Heart right ventricle (tissue), 16 donors: ENCODE measurements at regions of chr1 and their contacts with region 1.

Region 1: DNA sequence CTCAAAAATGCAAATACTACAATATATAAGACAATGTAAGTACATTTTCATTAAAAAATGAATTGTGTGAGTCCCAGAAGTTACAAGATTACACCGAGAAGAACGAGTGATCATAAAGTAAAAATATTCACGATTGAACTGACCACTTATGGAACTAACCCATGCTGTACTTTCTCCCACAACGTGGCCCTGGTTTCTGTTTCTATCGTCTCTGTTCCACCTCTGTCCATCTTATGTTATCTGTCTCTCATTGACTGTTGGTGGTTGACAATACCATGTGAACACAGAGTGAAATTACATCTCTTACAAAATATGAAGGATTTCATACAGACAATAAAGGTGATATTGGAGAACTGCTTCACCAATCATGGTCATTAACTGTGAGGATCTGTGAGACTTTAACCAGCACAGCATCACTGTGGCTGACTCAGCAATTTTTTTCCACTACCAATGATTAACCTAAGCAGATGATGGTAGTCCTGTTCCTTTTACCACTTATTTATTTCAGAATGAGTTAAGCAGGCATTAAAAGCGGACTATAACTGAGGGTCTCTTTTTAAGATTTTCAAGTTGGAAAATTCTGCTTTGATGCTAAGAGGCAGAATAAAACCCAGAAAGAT is 165.1 kb downstream of the TGFB2 start:
- DNase-seq: no peak
- ATAC-seq: no peak
- H3K4me3 ChIP-seq: no peak overlapping the region
- H3K27ac ChIP-seq: no peak overlapping the region
- H3K4me1 ChIP-seq: no peaks in the 10 kb centered on the region
- H3K27me3 ChIP-seq: no peaks in the 10 kb centered on the region
- CTCF ChIP-seq: no peak

Region 2: DNA sequence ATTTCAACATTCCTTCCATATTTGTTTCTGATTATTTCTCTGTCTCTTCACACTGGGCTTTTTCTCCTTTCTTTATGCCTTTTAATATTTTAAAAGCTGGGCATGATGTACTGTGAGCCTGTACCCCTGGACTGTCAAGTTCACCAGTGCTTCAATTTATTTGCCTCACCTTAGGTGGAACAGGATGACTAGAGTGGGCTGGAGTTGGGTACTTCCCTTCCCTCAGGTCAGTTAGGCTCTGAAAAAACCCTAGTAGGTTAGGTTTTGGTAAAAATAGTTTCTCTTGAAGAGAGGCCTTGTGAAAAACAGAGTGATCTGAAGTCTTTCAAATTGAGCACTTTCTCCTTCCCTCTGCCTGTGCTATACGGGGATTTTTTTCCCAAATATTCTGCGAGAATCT is 500.5 kb after region 1 on chr1:
- intact Hi-C with region 1: no loop called
- DNase-seq: no peak
- ATAC-seq: no peak
- H3K4me3 ChIP-seq: no peak overlapping the region
- H3K27ac ChIP-seq: no peak overlapping the region
- H3K4me1 ChIP-seq: peaks cover 0 to 8% (median 0%) of the 10 kb centered on the region in 9 donors
- H3K27me3 ChIP-seq: no peaks in the 10 kb centered on the region
- CTCF ChIP-seq: no peak

Region 3: GRCh38 chr1:219066631-219067349 is 556.5 kb after region 1 on chr1:
- intact Hi-C with region 1: loop called in 1 of 10 experiments (anchors 10 kb)
- DNase-seq: peak in 1 of 2 donors; percentile 5
- ATAC-seq: peak in 7 of 8 donors; percentile 50 to 79 (median 71)
- H3K4me3 ChIP-seq: no peak overlapping the region
- H3K27ac ChIP-seq: peak overlapping the region in 2 of 10 donors; percentile 17 to 26
- H3K4me1 ChIP-seq: peaks cover 0 to 11% (median 6%) of the 10 kb centered on the region in 9 donors
- H3K27me3 ChIP-seq: no peaks in the 10 kb centered on the region
- CTCF ChIP-seq: peak; percentile 42 to 73 (median 59)